AG04450 (cell line): ENCODE measurements at regions of chr3 and their contacts with region 1.

Region 1: GRCh38 chr3:53324105-53324504 is 23.2 kb downstream of the DCP1A start:
- DNase-seq: no peak
- H3K4me3 ChIP-seq: no peak overlapping the region
- H3K27ac ChIP-seq: no peak overlapping the region
- H3K27me3 ChIP-seq: no peaks in the 10 kb centered on the region
- CTCF ChIP-seq: no peak

Region 2: DNA sequence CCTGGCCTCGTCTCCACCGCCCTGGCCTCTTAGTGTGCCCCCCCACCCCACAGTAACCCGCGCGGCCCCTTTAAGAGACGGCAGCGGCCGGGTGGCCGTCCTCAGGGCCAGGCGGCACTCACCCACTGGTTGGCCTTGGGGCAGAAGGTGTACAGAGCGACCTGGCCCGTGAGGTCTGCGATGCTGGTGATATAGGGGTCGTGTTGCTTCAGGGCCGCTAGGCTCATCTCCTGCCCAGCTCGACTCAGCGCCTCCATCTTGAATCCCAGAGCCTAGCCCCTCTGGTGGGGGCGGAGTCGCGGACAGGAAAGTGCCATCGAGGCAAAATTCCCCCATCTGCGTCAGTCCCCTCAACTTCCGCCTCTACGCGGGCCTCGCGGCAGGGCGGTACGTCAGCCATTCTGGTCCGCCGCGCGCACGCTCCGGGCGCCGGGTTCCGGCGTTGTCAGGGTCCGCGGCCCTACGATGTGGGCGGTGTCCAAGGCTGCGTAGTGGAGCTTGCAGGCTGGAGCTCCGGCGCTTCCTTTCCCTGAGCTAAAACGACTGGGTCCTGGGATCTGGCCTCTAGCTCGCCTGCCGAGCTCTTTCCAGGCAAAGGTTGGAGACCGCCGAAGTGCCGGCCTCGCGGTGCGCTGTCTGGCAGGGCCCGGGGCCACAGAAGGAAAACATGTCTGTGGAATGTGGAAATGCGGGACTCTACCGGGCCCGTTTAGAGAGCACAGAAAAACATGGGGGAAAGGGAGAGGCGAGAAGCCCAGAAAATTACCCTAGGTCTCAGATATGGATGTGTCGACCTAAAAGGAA is 23.4 kb after region 1 on chr3 and contains the start of gene DCP1A:
- CTCF ChIA-PET with region 1: no interaction called
- POLR2A ChIA-PET with region 1: interaction called, 10 read pairs
- DNase-seq: peak; percentile 92
- H3K4me3 ChIP-seq: peak within 1 kb of the TSS; percentile 99
- H3K27ac ChIP-seq: peak within 1 kb of the TSS; percentile 95
- H3K27me3 ChIP-seq: no peaks in the 10 kb centered on the region
- CTCF ChIP-seq: no peak
- polyA plus RNA-seq, gene DCP1A: 23.5 and 27.0 TPM in 2 replicates